Posterior vena cava (tissue), 2 donors: ENCODE measurements at regions of chr6 and their contacts with region 1.

Region 1: GRCh38 chr6:38493931-38494547 is 145.7 kb downstream of the BTBD9 start:
- DNase-seq: peak; percentile 83

Region 2: DNA sequence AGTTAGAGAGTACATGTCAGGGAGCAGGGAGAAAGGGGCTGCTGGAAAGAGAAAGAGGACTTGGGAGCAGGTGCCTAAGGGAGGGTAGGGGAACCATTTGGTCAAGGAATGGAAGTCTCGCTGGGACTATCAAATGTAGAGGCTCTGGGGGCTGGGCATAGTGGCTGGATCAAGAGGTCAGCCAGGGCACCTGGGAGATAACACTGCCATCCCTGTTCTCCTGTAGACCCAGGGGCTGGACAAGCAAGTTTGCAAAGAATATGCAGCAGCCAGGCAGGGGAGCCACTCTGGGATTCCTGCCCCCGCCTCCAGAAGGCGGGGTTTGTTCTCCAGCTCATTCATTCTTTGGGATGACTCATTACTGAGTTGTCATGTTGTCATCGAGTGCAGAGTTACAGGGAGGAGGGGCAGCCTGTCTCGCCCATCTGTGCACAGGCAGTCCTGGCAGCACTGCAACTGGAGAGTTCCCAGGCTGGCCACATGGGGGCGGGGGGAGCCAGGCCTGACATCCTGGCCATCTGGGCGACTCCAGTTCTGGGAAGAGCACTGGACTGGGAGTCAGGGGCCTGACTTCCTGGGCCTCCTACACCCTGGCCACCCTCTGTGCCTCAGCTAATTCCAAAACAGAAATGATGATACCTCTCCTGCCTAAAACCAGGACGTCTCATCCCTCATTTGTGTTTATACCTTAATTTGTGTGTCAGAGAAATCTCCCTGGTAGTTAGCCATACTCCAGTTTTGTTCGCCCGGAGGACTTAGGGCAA is 702.7 kb before region 1 on chr6:
- intact Hi-C with region 1: loop called in 1 of 2 experiments (anchors 5 kb)
- DNase-seq: peak; percentile 97